Breast epithelium (tissue), 4 donors: ENCODE measurements at regions of chr16 and their contacts with region 1.

Region 1: GRCh38 chr16:69236319-69236718 is 49.4 kb downstream of the SNTB2 start:
- DNase-seq: no peak
- H3K4me3 ChIP-seq: no peak overlapping the region
- H3K27ac ChIP-seq: no peak overlapping the region
- H3K4me1 ChIP-seq: no peaks in the 10 kb centered on the region
- H3K27me3 ChIP-seq: no peaks in the 10 kb centered on the region
- CTCF ChIP-seq: no peak
- POLR2A ChIP-seq: no peak

Region 2: GRCh38 chr16:69250081-69250480 is 13.8 kb after region 1 on chr16:
- intact Hi-C with region 1: loop called (anchors 1 kb)
- DNase-seq: no peak
- H3K4me3 ChIP-seq: no peak overlapping the region
- H3K27ac ChIP-seq: no peak overlapping the region
- H3K4me1 ChIP-seq: peaks cover 0 to 4% of the 10 kb centered on the region in 2 donors
- H3K27me3 ChIP-seq: no peaks in the 10 kb centered on the region
- CTCF ChIP-seq: no peak
- POLR2A ChIP-seq: no peak